ENCODE measurements at regions of chr3 and their contacts with region 1.

Region 1: DNA sequence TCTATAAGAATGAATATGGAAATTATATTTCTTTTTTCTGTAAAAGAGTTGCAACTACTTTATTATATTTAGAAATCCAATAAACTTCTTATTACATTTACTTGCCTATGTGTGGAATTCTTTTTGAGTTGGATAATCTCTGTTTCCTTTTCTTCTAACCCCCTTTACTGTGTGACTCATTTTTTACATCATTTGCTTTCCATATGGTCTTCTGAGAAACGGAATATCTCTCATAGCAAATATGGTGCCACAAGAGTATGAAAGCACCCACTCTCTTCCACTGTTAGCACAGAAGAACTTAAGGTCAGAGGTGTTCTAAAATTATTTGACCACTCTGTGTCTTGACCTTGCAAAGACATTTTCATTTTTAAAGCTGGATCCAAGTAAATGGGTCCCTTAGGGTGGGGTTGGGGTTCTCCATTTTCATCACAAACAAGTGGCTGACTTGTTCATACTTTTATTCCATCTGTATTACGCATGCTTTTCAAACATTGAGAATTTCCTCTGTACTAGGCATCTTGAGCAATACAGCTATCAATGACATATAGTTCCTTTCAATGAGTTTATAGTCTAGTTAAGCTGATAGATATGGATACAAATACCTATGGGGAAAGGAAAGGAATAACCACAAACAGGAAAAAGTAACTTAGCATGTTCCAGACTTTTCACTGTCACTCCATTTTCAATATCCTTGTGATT is 281.1 kb upstream of the TPRG1 start:
- DNase-seq: no peak
- ATAC-seq: no peak
- H3K4me3 ChIP-seq: no peak overlapping the region
- H3K27ac ChIP-seq: no peak overlapping the region
- H3K4me1 ChIP-seq: peaks cover 0 to 32% (median 14%) of the 10 kb centered on the region in 12 donors
- H3K27me3 ChIP-seq: no peaks in the 10 kb centered on the region
- CTCF ChIP-seq: no peak
- POLR2A ChIP-seq: no peak

Region 2: GRCh38 chr3:188489639-188490405 is 400.9 kb before region 1 on chr3:
- intact Hi-C with region 1: no loop called
- DNase-seq: no peak
- ATAC-seq: no peak
- H3K4me3 ChIP-seq: no peak overlapping the region
- H3K27ac ChIP-seq: no peak overlapping the region
- H3K4me1 ChIP-seq: peaks cover 0 to 20% (median 7%) of the 10 kb centered on the region in 12 donors
- H3K27me3 ChIP-seq: no peaks in the 10 kb centered on the region
- CTCF ChIP-seq: no peak
- POLR2A ChIP-seq: no peak

Region 3: DNA sequence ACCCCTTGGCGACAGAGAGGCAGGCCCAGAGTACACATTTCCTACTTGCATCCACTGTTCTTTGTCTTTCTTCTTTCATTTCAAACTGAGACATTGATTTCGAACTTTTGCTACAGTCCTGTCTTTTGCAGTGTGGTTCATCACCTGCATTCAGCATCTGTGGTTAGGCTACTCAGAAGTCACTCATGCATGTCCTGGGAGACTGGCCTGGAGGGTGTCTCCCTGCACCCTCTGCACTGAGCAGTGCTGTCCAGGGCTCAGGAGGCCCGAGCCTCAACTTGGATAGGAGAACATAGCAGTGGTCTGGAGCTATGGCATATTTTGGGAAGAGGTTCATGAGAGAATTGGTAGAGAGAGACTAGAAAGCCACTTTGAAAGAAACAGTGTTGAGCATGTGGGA is 40.8 kb after region 1 on chr3:
- intact Hi-C with region 1: loop called in 1 of 10 experiments (anchors 5 kb)
- DNase-seq: no peak
- ATAC-seq: no peak
- H3K4me3 ChIP-seq: no peak overlapping the region
- H3K27ac ChIP-seq: no peak overlapping the region
- H3K4me1 ChIP-seq: peaks cover 0 to 19% (median 0%) of the 10 kb centered on the region in 12 donors
- H3K27me3 ChIP-seq: no peaks in the 10 kb centered on the region
- CTCF ChIP-seq: no peak
- POLR2A ChIP-seq: no peak

Region 4: DNA sequence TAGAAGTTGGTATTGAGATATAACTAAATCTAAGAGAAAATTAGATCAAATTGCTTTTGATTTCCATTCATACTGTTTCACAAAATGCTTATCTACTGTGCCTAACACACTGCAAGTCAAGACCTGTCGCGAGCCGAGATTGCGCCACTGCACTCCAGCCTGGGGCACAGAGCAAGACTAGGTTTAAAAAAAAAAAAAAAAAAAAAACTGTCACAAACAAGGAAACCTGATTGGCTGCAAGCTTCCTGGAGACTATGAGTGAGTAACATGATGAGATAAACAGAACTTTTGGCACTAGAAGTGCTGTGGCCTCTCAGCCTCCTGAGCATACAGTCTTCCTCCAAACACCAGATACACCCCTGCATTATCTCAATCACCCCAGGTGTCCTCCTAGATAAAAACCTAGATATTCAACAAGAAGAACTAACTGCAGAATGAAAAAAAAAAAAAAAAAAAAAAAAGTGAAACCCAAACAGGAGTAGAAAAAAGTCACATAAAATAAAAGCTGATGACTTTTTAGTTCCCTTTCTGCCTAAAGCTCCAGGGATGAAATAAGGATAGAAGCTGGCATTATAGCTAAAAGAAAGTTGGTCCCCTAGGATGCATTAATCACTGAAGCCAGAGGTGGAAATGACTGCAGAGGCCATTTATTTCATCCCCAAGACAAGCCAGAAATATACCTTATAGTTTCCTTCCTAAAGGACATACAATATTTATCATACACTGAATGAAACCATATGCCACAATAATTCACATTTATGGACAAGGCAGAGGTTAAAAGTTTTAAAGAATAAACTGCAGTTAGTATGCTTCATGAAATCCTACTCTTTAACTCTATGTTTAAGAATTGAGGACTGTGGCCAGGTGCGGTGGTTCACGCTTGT is 1147.6 kb after region 1 on chr3:
- intact Hi-C with region 1: no loop called
- DNase-seq: peak in 3 of 5 donors; percentile 15 to 49 (median 40)
- ATAC-seq: peak; percentile 61 to 88 (median 74)
- H3K4me3 ChIP-seq: no peak overlapping the region
- H3K27ac ChIP-seq: peak overlapping the region in 1 of 12 donors; percentile 28
- H3K4me1 ChIP-seq: peaks cover 0 to 8% (median 0%) of the 10 kb centered on the region in 12 donors
- H3K27me3 ChIP-seq: no peaks in the 10 kb centered on the region
- CTCF ChIP-seq: no peak
- POLR2A ChIP-seq: no peak